Heart left ventricle (tissue), 16 donors: ENCODE measurements at regions of chr2 and their contacts with region 1.

Region 1: GRCh38 chr2:133452583-133452982 is 115.7 kb downstream of the NCKAP5 start:
- DNase-seq: no peak
- ATAC-seq: no peak
- H3K4me3 ChIP-seq: no peak overlapping the region
- H3K27ac ChIP-seq: no peak overlapping the region
- H3K4me1 ChIP-seq: no peaks in the 10 kb centered on the region
- H3K27me3 ChIP-seq: no peaks in the 10 kb centered on the region
- CTCF ChIP-seq: no peak
- POLR2A ChIP-seq: no peak

Region 2: GRCh38 chr2:133477616-133477990 is 25.0 kb after region 1 on chr2:
- intact Hi-C with region 1: loop called in 1 of 10 experiments (anchors 2 kb)
- DNase-seq: no peak
- ATAC-seq: no peak
- H3K4me3 ChIP-seq: no peak overlapping the region
- H3K27ac ChIP-seq: no peak overlapping the region
- H3K4me1 ChIP-seq: no peaks in the 10 kb centered on the region
- H3K27me3 ChIP-seq: no peaks in the 10 kb centered on the region
- CTCF ChIP-seq: no peak
- POLR2A ChIP-seq: no peak

Region 3: DNA sequence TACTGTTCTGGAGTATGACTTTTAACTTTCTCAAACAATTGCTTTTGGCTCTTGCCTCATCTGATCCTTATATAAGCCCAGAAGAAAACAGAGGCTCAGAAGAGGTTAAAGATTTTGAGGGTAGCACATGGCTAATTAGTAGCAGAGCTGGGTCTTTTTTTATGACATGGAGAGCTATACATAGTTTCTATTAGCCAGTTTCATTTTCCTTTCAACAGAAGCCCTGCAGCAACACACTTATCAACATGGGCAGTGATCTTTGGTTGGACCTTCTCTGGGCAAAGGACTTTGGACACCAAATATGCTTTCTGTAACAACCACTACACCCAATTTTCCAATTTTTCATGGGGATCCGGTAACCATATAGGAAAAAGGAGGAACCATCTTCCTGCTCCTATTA is 50.7 kb after region 1 on chr2:
- intact Hi-C with region 1: no loop called
- DNase-seq: no peak
- ATAC-seq: no peak
- H3K4me3 ChIP-seq: no peak overlapping the region
- H3K27ac ChIP-seq: no peak overlapping the region
- H3K4me1 ChIP-seq: peaks cover 0 to 33% (median 13%) of the 10 kb centered on the region in 12 donors
- H3K27me3 ChIP-seq: no peaks in the 10 kb centered on the region
- CTCF ChIP-seq: no peak
- POLR2A ChIP-seq: no peak

Region 4: DNA sequence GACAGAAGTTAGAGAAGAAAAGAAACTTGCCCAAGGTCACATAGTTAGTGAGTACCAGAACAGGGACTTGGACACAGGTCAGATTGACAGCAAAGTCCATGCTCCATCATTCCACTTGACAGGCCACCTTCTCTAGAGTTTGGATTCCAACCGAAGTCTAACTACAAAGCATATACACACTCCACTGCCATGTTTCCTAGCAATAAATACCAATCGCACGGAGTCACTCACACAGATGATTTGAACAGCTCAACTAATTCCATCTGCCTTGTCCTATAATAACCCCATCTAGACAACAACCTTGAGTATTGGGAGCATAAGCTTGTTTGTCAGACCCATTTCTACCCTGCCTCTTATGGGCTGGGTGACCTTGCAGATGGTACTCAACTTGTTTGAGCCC is 466.7 kb after region 1 on chr2:
- intact Hi-C with region 1: no loop called
- DNase-seq: no peak
- ATAC-seq: no peak
- H3K4me3 ChIP-seq: no peak overlapping the region
- H3K27ac ChIP-seq: no peak overlapping the region
- H3K4me1 ChIP-seq: no peaks in the 10 kb centered on the region
- H3K27me3 ChIP-seq: peaks cover 0 to 3% (median 0%) of the 10 kb centered on the region in 9 donors
- CTCF ChIP-seq: no peak
- POLR2A ChIP-seq: no peak